B cell (primary cell): ENCODE measurements at regions of chr12 and their contacts with region 1.

Region 1: DNA sequence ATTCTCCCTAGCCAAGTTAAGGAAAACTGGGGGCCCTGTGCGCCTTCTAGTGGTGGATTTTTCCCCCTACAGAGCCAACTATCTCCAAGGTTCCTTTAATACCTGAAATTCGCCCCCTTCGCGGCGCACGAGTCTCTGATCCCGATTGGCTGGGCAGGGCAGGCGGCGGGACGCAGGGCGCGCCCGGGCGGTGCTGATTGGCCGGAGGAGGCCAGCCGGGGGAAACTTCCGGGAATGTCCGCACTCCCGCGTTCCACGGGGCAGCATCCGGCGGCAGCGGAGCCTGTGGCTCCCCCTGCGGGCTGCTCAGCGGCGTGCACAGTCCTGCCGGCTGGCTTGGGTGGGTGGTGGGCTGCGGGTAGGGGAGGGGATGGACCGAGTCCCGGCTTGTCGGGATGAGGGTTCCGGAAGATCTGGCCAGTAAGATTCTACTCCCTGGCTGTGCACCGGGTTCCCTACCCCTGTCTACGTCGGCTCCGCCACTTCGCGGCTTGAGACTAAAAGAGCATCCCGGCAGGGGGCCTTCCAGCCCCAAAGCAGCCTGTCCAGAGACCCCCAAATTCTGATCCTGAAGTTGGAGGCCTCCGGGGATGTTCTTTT is at the start of gene NABP2:
- DNase-seq: peak; percentile 94
- ATAC-seq: peak; percentile 72
- H3K4me3 ChIP-seq: peak within 1 kb of the TSS; percentile 41 to 71 (median 62)
- H3K4me3 Mint-ChIP-seq: peak within 1 kb of the TSS; percentile 100
- H3K27ac ChIP-seq: peak within 1 kb of the TSS; percentile 53 to 79
- H3K27ac Mint-ChIP-seq: peak within 1 kb of the TSS; percentile 87
- H3K4me1 ChIP-seq: peaks cover 26 to 48% of the 10 kb centered on the region in 2 donors
- H3K4me1 Mint-ChIP-seq: peaks cover 47% of the 10 kb centered on the region
- H3K27me3 ChIP-seq: no peaks in the 10 kb centered on the region
- H3K27me3 Mint-ChIP-seq: no peaks in the 10 kb centered on the region
- CTCF ChIP-seq: peak; percentile 93
- total RNA-seq, gene NABP2: 12.4 and 14.9 TPM in 2 replicates

Region 2: DNA sequence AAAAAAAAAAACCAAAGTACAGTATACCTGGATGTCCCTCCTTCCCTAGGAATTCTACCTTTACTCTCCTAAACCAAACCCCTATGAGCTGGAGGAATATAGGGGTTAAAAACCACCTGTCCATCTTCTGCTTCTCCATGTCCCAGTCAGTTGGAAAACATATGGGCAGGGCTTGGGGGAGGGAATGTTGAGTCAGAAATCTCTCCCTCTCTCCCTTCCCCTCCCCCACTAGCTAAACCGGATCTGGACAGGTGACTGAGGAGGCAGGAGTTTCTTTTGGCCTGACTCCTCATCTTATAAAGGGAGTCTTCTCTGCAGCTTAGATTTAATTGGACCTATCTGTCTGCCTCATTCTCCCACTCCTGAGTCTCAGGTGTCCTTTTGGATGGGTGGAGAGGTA is 138.1 kb before region 1 on chr12:
- CTCF ChIA-PET with region 1: no interaction called
- POLR2A ChIA-PET with region 1: interaction called, 12 read pairs
- intact Hi-C with region 1: no loop called
- DNase-seq: no peak
- ATAC-seq: no peak
- H3K4me3 ChIP-seq: no peak overlapping the region
- H3K4me3 Mint-ChIP-seq: no peak overlapping the region
- H3K27ac ChIP-seq: no peak overlapping the region
- H3K27ac Mint-ChIP-seq: no peak overlapping the region
- H3K4me1 ChIP-seq: peaks cover 0 to 2% of the 10 kb centered on the region in 2 donors
- H3K4me1 Mint-ChIP-seq: peaks cover under 1% of the 10 kb centered on the region
- H3K27me3 ChIP-seq: peaks cover 0 to 21% (median 7%) of the 10 kb centered on the region in 4 experiments
- H3K27me3 Mint-ChIP-seq: peaks cover 22% of the 10 kb centered on the region
- CTCF ChIP-seq: no peak

Region 3: DNA sequence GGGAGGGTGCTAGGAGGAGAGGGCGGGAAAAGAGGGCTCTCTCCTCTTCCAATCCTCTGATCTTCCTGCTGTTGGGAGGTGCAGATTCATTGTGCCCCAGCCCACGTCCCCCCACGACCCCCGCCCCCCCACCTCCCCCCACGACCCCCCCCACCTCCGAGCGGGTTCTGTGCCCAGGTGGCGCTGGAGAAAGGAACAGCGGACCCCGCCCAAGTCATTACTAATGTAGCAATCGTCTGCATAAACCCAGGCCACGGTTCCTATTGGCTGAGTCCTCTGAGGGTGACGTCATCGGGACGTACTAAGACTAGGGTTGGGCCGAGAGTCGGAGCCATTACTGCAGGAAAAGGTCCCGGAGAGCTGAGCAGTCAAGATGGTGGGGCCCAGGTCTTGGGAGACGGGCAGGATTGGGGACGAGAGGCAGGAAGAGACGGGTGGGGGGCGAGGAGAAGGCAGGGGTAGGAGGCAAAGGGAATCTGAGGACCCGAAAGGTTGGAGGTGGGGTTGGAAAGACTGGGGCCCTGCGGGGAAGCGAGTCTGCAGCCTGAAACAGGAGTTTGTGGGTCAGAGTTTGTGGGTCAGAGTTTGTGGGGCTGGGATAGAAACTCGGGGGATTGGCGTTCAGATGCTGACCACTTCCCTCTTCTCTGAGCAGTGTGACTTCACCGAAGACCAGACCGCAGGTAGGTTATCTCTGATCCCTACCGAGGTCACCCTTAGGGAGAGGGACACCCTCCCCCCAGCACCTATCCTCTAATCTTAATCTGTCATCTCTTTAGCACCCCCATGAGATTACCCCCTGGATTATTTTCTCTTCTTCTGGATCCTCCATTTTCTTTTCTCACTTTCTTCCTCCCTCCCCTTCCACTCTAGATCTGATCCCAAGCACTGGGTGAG is 65.9 kb before region 1 on chr12 and contains the start of gene MYL6:
- CTCF ChIA-PET with region 1: interaction called, 6 read pairs
- POLR2A ChIA-PET with region 1: interaction called, 4 read pairs
- intact Hi-C with region 1: loop called (anchors 2 kb)
- DNase-seq: peak; percentile 96
- ATAC-seq: peak; percentile 87
- H3K4me3 ChIP-seq: peak within 1 kb of the TSS; percentile 80 to 97 (median 94)
- H3K4me3 Mint-ChIP-seq: peak within 1 kb of the TSS; percentile 96
- H3K27ac ChIP-seq: peak within 1 kb of the TSS; percentile 88 to 97
- H3K27ac Mint-ChIP-seq: peak within 1 kb of the TSS; percentile 97
- H3K4me1 ChIP-seq: peaks cover 20 to 40% of the 10 kb centered on the region in 2 donors
- H3K4me1 Mint-ChIP-seq: peaks cover 44% of the 10 kb centered on the region
- H3K27me3 ChIP-seq: no peaks in the 10 kb centered on the region
- H3K27me3 Mint-ChIP-seq: no peaks in the 10 kb centered on the region
- CTCF ChIP-seq: no peak
- total RNA-seq, gene MYL6: 645 and 675 TPM in 2 replicates

Region 4: GRCh38 chr12:56206457-56207166 is 17.6 kb before region 1 on chr12:
- CTCF ChIA-PET with region 1: interaction called, 126 read pairs
- POLR2A ChIA-PET with region 1: interaction called, 65 read pairs
- intact Hi-C with region 1: loop called (anchors 1 kb)
- DNase-seq: peak; percentile 65
- ATAC-seq: no peak
- H3K4me3 ChIP-seq: no peak overlapping the region
- H3K4me3 Mint-ChIP-seq: no peak overlapping the region
- H3K27ac ChIP-seq: peak overlapping the region in 1 of 2 donors; percentile 65
- H3K27ac Mint-ChIP-seq: peak overlapping the region; percentile 89
- H3K4me1 ChIP-seq: peaks cover 9 to 18% of the 10 kb centered on the region in 2 donors
- H3K4me1 Mint-ChIP-seq: peaks cover 47% of the 10 kb centered on the region
- H3K27me3 ChIP-seq: no peaks in the 10 kb centered on the region
- H3K27me3 Mint-ChIP-seq: no peaks in the 10 kb centered on the region
- CTCF ChIP-seq: peak; percentile 63

Region 5: DNA sequence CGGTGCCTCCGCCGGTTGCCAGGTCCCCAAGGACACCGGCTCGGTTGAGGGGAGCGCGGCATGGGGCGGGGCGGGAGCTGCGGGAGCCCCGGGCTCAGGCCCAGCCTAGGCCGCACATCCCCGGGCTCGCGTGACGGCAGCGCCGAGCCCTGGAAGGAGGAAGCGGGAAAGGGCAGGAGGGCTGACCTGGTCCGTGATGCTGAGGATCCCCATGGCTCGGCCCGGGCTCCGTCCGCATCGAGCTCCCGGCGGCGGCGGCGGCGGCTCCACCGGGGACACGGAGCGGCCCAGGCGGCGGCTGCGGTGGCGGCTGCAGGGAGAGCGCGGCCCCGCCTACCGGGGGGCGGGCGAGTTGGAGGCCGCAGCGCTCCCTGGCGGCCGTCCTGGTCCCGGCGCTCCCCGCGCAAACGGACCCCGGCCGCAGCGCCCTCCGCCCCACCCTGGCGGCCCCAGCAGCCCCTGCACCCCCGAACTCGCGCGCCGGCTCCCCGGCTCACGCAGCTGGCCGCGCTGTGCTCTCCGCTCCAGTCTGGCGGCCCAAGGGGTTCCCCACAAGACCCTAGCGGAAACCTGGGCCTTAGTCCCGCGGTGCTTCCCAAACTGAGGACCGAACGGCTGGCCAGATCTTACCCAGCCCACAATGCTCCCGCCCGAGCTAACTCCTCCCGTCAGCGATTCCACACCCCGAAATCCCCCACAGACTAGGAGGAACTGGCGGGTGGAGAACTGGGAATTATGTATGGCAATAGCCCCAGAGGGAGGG is 34.0 kb after region 1 on chr12 and contains the start of gene ANKRD52:
- CTCF ChIA-PET with region 1: interaction called, 10 read pairs
- POLR2A ChIA-PET with region 1: interaction called, 5 read pairs
- intact Hi-C with region 1: loop called (anchors 1 kb)
- DNase-seq: peak; percentile 93
- ATAC-seq: peak; percentile 95
- H3K4me3 ChIP-seq: peak within 1 kb of the TSS; percentile 32 to 99 (median 77)
- H3K4me3 Mint-ChIP-seq: peak within 1 kb of the TSS; percentile 90
- H3K27ac ChIP-seq: peak within 1 kb of the TSS; percentile 60 to 81
- H3K27ac Mint-ChIP-seq: peak within 1 kb of the TSS; percentile 92
- H3K4me1 ChIP-seq: peaks cover 16 to 21% of the 10 kb centered on the region in 2 donors
- H3K4me1 Mint-ChIP-seq: peaks cover 18% of the 10 kb centered on the region
- H3K27me3 ChIP-seq: no peaks in the 10 kb centered on the region
- H3K27me3 Mint-ChIP-seq: no peaks in the 10 kb centered on the region
- CTCF ChIP-seq: peak; percentile 78
- total RNA-seq, gene ANKRD52: 46.5 and 54.6 TPM in 2 replicates

Region 6: GRCh38 chr12:56266693-56267442 is 42.7 kb after region 1 on chr12 and contains the start of gene COQ10A:
- CTCF ChIA-PET with region 1: interaction called, 10 read pairs
- POLR2A ChIA-PET with region 1: interaction called, 6 read pairs
- intact Hi-C with region 1: loop called (anchors 1 kb)
- DNase-seq: peak; percentile 94
- ATAC-seq: peak; percentile 89
- H3K4me3 ChIP-seq: peak within 1 kb of the TSS; percentile 65 to 86 (median 75)
- H3K4me3 Mint-ChIP-seq: peak within 1 kb of the TSS; percentile 91
- H3K27ac ChIP-seq: peak within 1 kb of the TSS; percentile 94
- H3K27ac Mint-ChIP-seq: peak within 1 kb of the TSS; percentile 95
- H3K4me1 ChIP-seq: peaks cover 10 to 15% of the 10 kb centered on the region in 2 donors
- H3K4me1 Mint-ChIP-seq: peaks cover 20% of the 10 kb centered on the region
- H3K27me3 ChIP-seq: no peaks in the 10 kb centered on the region
- H3K27me3 Mint-ChIP-seq: no peaks in the 10 kb centered on the region
- CTCF ChIP-seq: peak; percentile 72
- total RNA-seq, gene COQ10A: 73.5 and 76.3 TPM in 2 replicates